ENCODE measurements at regions of chr12 and their contacts with region 1.

Region 1: GRCh38 chr12:11581179-11581755 is 68.2 kb upstream of the ETV6 start:
- DNase-seq: peak in 4 of 5 donors; percentile 44 to 63 (median 57)
- ATAC-seq: peak in 1 of 4 donors; percentile 31
- H3K4me3 ChIP-seq: no peak overlapping the region
- H3K27ac ChIP-seq: no peak overlapping the region
- H3K4me1 ChIP-seq: peaks cover 0 to 25% (median 0%) of the 10 kb centered on the region in 12 donors
- H3K27me3 ChIP-seq: no peaks in the 10 kb centered on the region
- CTCF ChIP-seq: peak; percentile 49 to 81 (median 72)
- POLR2A ChIP-seq: no peak

Region 2: GRCh38 chr12:11891754-11892386 is 310.6 kb after region 1 on chr12:
- intact Hi-C with region 1: loop called in 3 of 10 experiments (anchors 5 kb)
- DNase-seq: peak; percentile 34 to 72 (median 60)
- ATAC-seq: peak; percentile 66 to 89 (median 83)
- H3K4me3 ChIP-seq: no peak overlapping the region
- H3K27ac ChIP-seq: peak overlapping the region in 6 of 12 donors; percentile 2 to 57 (median 40)
- H3K4me1 ChIP-seq: peaks cover 0 to 23% (median 10%) of the 10 kb centered on the region in 12 donors
- H3K27me3 ChIP-seq: no peaks in the 10 kb centered on the region
- CTCF ChIP-seq: peak in 11 of 12 donors; percentile 13 to 54 (median 35)
- POLR2A ChIP-seq: no peak

Region 3: GRCh38 chr12:12017798-12018197 is 436.5 kb after region 1 on chr12:
- intact Hi-C with region 1: loop called in 4 of 10 experiments (anchors 2 to 5 kb)
- DNase-seq: peak in 1 of 5 donors; percentile 20
- ATAC-seq: peak in 3 of 4 donors; percentile 60 to 73 (median 67)
- H3K4me3 ChIP-seq: no peak overlapping the region
- H3K27ac ChIP-seq: no peak overlapping the region
- H3K4me1 ChIP-seq: peaks cover 0 to 13% (median 6%) of the 10 kb centered on the region in 12 donors
- H3K27me3 ChIP-seq: no peaks in the 10 kb centered on the region
- CTCF ChIP-seq: peak in 10 of 12 donors; percentile 25 to 56 (median 44)
- POLR2A ChIP-seq: no peak

Region 4: DNA sequence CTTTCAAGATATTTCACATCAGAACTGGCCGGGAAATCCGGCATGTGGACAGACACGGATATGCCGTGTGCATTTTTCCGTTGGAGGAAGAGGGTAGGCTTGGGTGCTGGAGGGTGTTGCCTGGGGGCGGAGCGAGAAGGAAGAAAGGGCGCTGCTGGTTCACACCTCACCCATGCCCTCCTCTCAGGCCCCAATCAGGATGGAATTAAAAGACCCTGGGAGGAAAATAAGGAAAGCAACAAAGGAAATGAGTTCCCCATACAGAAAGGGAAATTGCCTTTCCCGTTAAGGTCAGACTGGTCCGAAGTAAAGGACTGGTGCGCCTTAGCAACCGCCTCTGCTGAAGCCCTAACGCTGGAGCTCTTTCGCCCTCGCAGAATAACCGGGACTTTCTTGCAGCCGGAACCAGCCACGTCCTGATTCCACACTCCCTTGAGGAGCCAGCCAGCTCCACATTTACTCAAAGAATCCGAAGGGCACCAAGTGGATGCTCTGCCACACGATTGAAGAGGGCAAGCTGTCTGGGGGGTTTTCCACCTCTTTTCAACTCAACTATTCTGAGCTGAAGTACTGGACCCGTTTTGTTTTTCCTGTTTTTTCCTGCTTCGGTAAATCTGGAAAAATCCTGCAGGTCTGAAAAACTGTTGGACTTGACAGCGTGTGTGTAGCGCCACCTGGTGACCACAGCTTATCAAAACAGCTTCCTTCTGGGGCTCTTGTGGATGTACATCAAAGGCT is 451.8 kb after region 1 on chr12:
- intact Hi-C with region 1: loop called (anchors 1 to 2 kb)
- DNase-seq: peak in 4 of 5 donors; percentile 71 to 82 (median 77)
- ATAC-seq: peak; percentile 83 to 92 (median 88)
- H3K4me3 ChIP-seq: peak overlapping the region in 11 of 12 donors; percentile 1 to 59 (median 50)
- H3K27ac ChIP-seq: peak overlapping the region in 11 of 12 donors; percentile 24 to 88 (median 63)
- H3K4me1 ChIP-seq: peaks cover 0 to 15% (median 5%) of the 10 kb centered on the region in 12 donors
- H3K27me3 ChIP-seq: no peaks in the 10 kb centered on the region
- CTCF ChIP-seq: peak; percentile 66 to 93 (median 86)
- POLR2A ChIP-seq: no peak

Region 5: DNA sequence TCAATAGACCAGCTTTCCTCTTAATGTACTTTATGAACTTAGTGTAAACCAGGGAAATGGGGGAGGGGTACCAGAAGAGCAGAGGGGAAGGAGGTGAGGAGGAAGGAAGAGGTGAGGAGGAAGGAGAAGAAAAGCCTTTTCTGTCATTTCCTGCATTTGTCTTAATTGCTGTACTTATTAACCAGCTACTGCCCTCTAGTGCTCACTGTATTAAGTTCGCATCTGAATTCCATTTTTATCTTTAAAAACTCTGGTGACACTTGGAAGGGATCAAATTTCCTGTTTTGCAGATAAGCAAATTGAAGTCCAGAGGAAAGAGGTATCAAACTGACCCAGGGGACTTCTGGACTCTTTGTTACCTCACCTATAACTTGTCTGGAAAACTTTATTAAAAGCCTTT is 746.5 kb after region 1 on chr12:
- intact Hi-C with region 1: loop called in 3 of 10 experiments (anchors 5 to 10 kb)
- DNase-seq: no peak
- ATAC-seq: peak in 3 of 4 donors; percentile 41 to 57 (median 57)
- H3K4me3 ChIP-seq: no peak overlapping the region
- H3K27ac ChIP-seq: peak overlapping the region in 6 of 12 donors; percentile 0 to 63 (median 36)
- H3K4me1 ChIP-seq: peaks cover 0 to 12% (median 8%) of the 10 kb centered on the region in 12 donors
- H3K27me3 ChIP-seq: no peaks in the 10 kb centered on the region
- CTCF ChIP-seq: peak; percentile 45 to 84 (median 70)
- POLR2A ChIP-seq: no peak

Region 6: GRCh38 chr12:12334367-12335040 is 753.2 kb after region 1 on chr12:
- intact Hi-C with region 1: loop called in 3 of 10 experiments (anchors 5 to 10 kb)
- DNase-seq: peak; percentile 35 to 67 (median 47)
- ATAC-seq: peak in 3 of 4 donors; percentile 50 to 66 (median 52)
- H3K4me3 ChIP-seq: no peak overlapping the region
- H3K27ac ChIP-seq: peak overlapping the region in 1 of 12 donors; percentile 53
- H3K4me1 ChIP-seq: peaks cover 0 to 25% (median 11%) of the 10 kb centered on the region in 12 donors
- H3K27me3 ChIP-seq: no peaks in the 10 kb centered on the region
- CTCF ChIP-seq: peak; percentile 76 to 94 (median 82)
- POLR2A ChIP-seq: no peak

Measured in heart left ventricle (tissue), 16 donors.